PC-3 (cell line): ENCODE measurements at regions of chr2 and their contacts with region 1.

Region 1: GRCh38 chr2:1591978-1592907 is 152.1 kb downstream of the PXDN start:
- DNase-seq: peak; percentile 90
- ATAC-seq: peak; percentile 65
- H3K4me3 ChIP-seq: peak overlapping the region; percentile 60
- H3K27ac ChIP-seq: peak overlapping the region; percentile 89
- H3K4me1 ChIP-seq: peaks cover 53% of the 10 kb centered on the region
- H3K27me3 ChIP-seq: no peaks in the 10 kb centered on the region
- CTCF ChIP-seq: peak; percentile 87

Region 2: DNA sequence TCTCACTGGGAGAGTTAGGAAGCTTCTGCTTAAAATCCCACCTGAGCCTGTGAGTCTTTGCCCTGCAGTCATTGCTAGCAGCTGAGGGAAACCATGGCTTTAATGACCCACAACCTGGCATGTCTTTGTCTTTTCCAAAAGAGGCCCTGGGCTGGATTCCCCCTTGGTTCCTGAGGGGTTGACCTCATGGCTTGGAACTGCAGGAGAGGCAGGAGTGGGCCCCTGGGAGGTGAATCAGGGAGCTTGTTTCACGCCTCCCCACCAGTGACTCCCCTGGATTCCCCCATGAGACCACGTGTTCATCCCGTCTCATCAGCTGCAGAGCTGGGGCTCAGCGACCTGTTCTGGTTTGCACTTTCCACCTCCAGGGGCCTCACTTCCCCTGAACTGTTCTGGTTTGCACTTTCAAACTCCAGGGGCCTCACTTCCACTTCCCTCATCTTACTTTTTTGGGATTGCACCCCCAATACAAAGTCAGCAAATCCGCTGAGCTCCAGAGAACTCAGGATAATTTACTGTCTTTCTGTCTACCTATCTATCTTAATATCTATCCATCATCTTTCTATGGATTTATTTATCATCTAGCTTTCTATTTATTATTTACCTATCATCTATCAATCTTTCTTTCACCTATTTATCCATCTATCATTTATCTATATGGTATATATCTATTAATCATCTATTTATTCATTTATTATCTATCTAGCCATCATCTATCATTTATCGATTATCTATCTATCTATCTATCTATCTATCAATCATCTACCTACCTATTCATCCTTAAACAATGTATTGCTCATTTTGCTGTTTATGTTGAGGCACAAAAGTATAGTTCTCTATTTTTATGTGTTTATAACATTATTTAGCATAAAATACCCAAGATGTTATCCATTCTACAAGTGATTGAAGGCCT is 856.3 kb before region 1 on chr2:
- CTCF ChIA-PET with region 1: no interaction called
- POLR2A ChIA-PET with region 1: no interaction called
- intact Hi-C with region 1: no loop called
- DNase-seq: no peak
- ATAC-seq: no peak
- H3K4me3 ChIP-seq: no peak overlapping the region
- H3K27ac ChIP-seq: no peak overlapping the region
- H3K4me1 ChIP-seq: peaks cover 6% of the 10 kb centered on the region
- H3K27me3 ChIP-seq: no peaks in the 10 kb centered on the region
- CTCF ChIP-seq: no peak

Region 3: DNA sequence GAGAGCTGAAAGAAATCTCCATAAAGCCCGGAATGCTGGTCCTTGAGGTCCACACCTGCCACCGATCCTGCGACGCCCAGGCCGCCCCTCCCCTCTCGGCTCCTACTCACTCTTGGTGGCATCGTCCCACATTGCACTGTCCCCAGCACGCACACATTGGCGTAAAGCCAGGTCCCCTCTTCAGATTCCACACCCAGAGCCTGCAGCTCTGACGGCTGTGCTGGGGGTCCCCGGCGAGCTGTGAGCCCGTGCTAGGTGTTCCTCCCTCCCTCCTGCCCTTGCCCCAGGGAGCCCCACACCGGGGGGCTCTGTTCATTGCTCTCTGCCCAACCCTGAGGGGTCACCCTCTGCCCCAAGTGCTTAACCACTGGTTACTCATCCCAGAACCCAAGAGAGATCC is 170.5 kb before region 1 on chr2:
- CTCF ChIA-PET with region 1: no interaction called
- POLR2A ChIA-PET with region 1: no interaction called
- intact Hi-C with region 1: no loop called
- DNase-seq: no peak
- ATAC-seq: no peak
- H3K4me3 ChIP-seq: no peak overlapping the region
- H3K27ac ChIP-seq: no peak overlapping the region
- H3K4me1 ChIP-seq: no peaks in the 10 kb centered on the region
- H3K27me3 ChIP-seq: peaks cover 82% of the 10 kb centered on the region
- CTCF ChIP-seq: no peak

Region 4: GRCh38 chr2:1625208-1625937 is 33.1 kb after region 1 on chr2:
- CTCF ChIA-PET with region 1: interaction called, 6 read pairs
- POLR2A ChIA-PET with region 1: no interaction called
- intact Hi-C with region 1: loop called (anchors 1 kb)
- DNase-seq: peak; percentile 98
- ATAC-seq: peak; percentile 92
- H3K4me3 ChIP-seq: peak overlapping the region; percentile 60
- H3K27ac ChIP-seq: peak overlapping the region; percentile 96
- H3K4me1 ChIP-seq: peaks cover 53% of the 10 kb centered on the region
- H3K27me3 ChIP-seq: no peaks in the 10 kb centered on the region
- CTCF ChIP-seq: no peak

Region 5: GRCh38 chr2:1631804-1632348 is 39.6 kb after region 1 on chr2:
- CTCF ChIA-PET with region 1: interaction called, 8 read pairs
- POLR2A ChIA-PET with region 1: no interaction called
- intact Hi-C with region 1: loop called (anchors 2 kb)
- DNase-seq: peak; percentile 97
- ATAC-seq: peak; percentile 83
- H3K4me3 ChIP-seq: peak overlapping the region; percentile 28; the same call in 1 of the 2 replicates
- H3K27ac ChIP-seq: peak overlapping the region; percentile 98
- H3K4me1 ChIP-seq: peaks cover 76% of the 10 kb centered on the region
- H3K27me3 ChIP-seq: no peaks in the 10 kb centered on the region
- CTCF ChIP-seq: no peak

Region 6: DNA sequence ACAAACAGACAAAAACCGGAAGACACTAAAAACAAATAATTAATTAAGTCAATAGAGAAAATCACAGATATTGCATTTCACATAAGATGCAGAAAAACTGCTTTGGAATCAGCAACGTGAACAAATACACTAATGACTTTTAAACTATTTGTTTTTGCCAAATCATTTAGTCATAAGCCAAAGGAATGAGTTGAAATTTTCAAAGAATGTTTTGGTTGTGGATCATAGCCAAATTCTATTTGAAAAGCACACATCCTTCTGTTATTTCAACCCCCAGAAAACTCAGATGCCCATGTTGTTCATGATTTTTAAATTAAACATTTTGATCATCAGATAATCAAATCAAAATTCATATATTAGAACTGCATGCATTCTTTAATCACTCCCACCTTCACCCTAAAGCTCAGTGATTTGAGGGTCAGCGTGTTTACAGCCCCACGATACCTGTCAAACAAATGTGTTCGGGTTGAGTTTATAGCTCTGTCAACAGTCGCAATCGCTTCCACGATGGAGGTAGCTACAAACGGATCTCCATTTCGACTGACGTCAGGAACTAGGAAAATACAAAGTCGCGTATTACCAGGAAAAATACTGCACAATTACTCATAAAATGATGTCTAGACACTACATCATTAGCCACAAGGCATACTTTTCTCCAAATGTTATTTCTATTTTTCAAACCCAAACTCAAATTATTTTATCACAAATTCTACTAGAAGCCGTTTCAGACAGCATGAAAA is 61.9 kb after region 1 on chr2:
- CTCF ChIA-PET with region 1: no interaction called
- POLR2A ChIA-PET with region 1: no interaction called
- intact Hi-C with region 1: loop called (anchors 1 kb)
- DNase-seq: peak; percentile 62
- ATAC-seq: peak; percentile 16
- H3K4me3 ChIP-seq: no peak overlapping the region
- H3K27ac ChIP-seq: peak overlapping the region; percentile 40
- H3K4me1 ChIP-seq: peaks cover 28% of the 10 kb centered on the region
- H3K27me3 ChIP-seq: no peaks in the 10 kb centered on the region
- CTCF ChIP-seq: no peak

Region 7: DNA sequence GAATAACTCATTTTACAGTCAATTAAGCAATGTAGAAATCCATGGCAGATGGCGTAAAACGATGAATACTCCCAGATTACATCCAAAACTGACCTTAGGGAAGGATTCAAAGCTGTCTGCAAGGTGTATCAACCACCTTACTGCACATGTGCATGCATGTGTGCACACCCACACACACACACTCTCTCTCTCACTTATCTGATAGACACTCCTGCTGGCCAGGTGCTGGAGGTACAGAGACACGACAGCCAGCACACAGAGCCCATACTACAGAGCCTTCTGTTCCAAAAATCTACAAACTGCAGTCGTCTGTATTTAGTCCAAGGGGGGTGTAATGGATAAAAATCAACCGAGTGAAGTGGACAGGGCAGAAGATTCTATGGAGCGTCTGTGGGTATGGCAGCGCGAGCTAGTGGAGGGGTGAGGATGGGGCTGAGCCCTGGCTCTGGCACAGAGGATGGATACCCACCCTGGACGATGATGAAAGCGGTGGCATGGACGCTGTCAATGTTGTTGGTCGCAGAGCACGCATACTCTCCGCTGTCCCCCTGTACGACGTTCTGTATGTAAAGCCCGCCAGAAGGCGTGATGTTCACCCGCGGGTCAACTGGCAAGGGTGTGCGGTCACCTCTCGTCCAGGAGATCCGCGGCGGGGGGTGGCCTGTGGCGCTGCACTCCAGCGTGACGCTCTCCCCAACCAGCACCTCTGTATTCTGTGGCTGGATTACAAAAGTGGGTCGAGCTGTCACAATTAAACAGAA is 73.7 kb after region 1 on chr2:
- CTCF ChIA-PET with region 1: no interaction called
- POLR2A ChIA-PET with region 1: no interaction called
- intact Hi-C with region 1: no loop called
- DNase-seq: no peak
- ATAC-seq: no peak
- H3K4me3 ChIP-seq: no peak overlapping the region
- H3K27ac ChIP-seq: no peak overlapping the region
- H3K4me1 ChIP-seq: no peaks in the 10 kb centered on the region
- H3K27me3 ChIP-seq: no peaks in the 10 kb centered on the region
- CTCF ChIP-seq: no peak; the same call in 1 of the 2 replicates

Region 8: DNA sequence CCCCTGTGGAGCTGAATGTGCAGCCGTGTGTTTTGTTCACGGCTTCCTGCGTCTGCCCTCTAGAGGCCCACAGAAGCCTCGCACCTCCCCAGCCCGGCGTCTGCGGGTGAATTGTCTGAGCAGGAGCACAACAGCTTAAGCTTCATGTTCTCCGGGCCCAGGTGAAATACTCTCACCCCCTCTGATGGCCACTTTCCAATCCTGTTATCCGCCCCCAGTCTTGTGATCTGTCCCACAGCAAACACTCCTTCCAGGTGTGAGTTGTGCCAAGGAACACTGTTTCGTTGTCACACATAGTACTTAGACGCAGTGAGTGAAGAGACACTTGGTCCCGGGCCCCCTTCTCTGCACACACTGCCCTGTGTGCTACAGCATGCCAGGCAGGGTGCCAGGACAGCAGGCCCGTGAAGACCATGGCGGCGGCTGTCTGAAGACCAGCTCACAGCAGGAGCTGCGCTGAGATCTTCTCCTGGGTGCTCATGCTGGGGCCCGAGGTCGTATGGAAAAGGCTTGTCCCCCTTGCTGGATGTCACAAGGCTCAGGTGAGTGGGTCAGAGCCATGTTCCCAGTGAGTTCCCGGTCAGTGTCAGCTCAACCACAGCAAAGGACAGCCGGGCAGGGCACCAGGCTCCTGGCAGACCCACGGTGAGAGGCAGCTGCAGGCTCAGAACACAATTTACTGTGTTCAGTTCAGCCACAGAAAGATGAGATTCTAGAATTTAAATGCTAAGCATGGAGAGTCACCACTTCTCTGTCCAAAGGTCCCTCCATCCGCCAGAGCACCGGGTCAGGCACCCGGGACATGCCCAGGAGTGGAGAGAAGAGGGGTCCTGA is 158.9 kb after region 1 on chr2:
- CTCF ChIA-PET with region 1: interaction called, 12 read pairs
- POLR2A ChIA-PET with region 1: no interaction called
- intact Hi-C with region 1: loop called (anchors 1 kb)
- DNase-seq: peak; percentile 86
- ATAC-seq: peak; percentile 91
- H3K4me3 ChIP-seq: no peak overlapping the region
- H3K27ac ChIP-seq: no peak overlapping the region
- H3K4me1 ChIP-seq: peaks cover 4% of the 10 kb centered on the region
- H3K27me3 ChIP-seq: no peaks in the 10 kb centered on the region
- CTCF ChIP-seq: peak; percentile 90

Region 9: GRCh38 chr2:1769703-1770422 is 177.6 kb after region 1 on chr2:
- CTCF ChIA-PET with region 1: no interaction called
- POLR2A ChIA-PET with region 1: no interaction called
- intact Hi-C with region 1: loop called (anchors 2 kb)
- DNase-seq: peak; percentile 91
- ATAC-seq: peak; percentile 99
- H3K4me3 ChIP-seq: no peak overlapping the region
- H3K27ac ChIP-seq: no peak overlapping the region
- H3K4me1 ChIP-seq: no peaks in the 10 kb centered on the region; the same call in 1 of the 2 replicates
- H3K27me3 ChIP-seq: no peaks in the 10 kb centered on the region
- CTCF ChIP-seq: peak; percentile 97

Region 10: GRCh38 chr2:1817256-1818051 is 225.2 kb after region 1 on chr2:
- CTCF ChIA-PET with region 1: no interaction called
- POLR2A ChIA-PET with region 1: no interaction called
- intact Hi-C with region 1: no loop called
- DNase-seq: peak; percentile 89
- ATAC-seq: peak; percentile 94
- H3K4me3 ChIP-seq: peak overlapping the region; percentile 33; the same call in 1 of the 2 replicates
- H3K27ac ChIP-seq: peak overlapping the region; percentile 74
- H3K4me1 ChIP-seq: peaks cover 23% of the 10 kb centered on the region
- H3K27me3 ChIP-seq: no peaks in the 10 kb centered on the region
- CTCF ChIP-seq: peak; percentile 96